ENCODE measurements at regions of chr5 and their contacts with region 1.

Region 1: GRCh38 chr5:179060116-179061008 is at the start of gene ZNF354C:
- DNase-seq: peak; percentile 87
- ATAC-seq: peak; percentile 97
- H3K4me3 ChIP-seq: peak within 1 kb of the TSS; percentile 45 to 87 (median 78)
- H3K4me3 Mint-ChIP-seq: peak within 1 kb of the TSS; percentile 91
- H3K27ac ChIP-seq: peak within 1 kb of the TSS; percentile 41 to 77
- H3K27ac Mint-ChIP-seq: peak within 1 kb of the TSS; percentile 86
- H3K4me1 ChIP-seq: peaks cover 5 to 11% of the 10 kb centered on the region in 2 donors
- H3K4me1 Mint-ChIP-seq: peaks cover 21% of the 10 kb centered on the region
- H3K27me3 ChIP-seq: peaks cover 0 to 4% (median 0%) of the 10 kb centered on the region in 4 experiments
- H3K27me3 Mint-ChIP-seq: peaks cover 5% of the 10 kb centered on the region
- CTCF ChIP-seq: no peak
- total RNA-seq, gene ZNF354C: 9.1 and 9.5 TPM in 2 replicates

Region 2: DNA sequence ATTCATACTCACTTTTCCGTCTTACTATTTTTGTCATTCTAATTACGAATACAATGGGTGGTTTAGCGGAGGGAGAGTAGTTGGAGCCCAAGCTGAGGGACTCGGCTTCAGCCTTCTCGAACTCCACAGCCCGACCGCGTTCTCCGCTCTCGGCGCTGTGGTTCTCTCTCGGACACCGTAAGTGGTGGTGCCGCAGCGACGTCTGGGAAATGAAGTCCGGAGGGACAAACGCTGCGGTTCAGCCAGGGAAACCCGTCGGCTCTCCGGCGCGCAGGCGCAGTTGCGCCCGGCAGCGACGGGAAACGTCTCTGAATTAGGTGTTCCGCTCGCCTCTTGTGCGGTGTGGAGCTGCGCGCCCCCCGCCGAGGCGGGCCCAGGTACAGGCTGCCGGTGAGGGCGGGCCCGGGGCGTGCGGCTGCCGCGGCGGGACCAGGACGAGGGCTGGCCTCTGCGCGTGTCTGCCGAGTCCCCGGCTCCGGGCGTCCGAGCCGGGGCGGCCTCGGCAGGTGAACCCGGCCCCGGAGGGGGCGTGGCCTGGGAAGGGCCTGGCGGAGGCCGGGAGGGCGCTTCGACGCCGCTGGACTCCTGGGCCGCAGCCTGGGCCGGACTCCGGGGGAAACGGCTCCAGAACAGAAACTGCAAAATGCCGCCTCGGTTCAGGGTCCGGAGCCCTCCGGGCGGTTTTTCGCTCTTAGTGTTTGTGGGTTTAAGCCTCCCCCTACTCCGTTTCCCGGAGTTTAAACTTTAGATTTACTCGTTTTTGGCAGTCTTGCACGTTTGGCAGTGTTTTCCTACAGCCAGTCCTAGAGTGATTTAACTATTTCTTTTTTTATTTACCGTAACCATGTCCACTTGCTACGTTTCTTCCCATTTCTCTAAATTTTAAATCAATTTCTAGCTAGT is 36.6 kb before region 1 on chr5 and contains the start of gene ZNF879:
- CTCF ChIA-PET with region 1: interaction called, 4 read pairs
- POLR2A ChIA-PET with region 1: interaction called, 3 read pairs
- intact Hi-C with region 1: loop called (anchors 1 kb)
- DNase-seq: peak; percentile 97
- ATAC-seq: peak; percentile 94
- H3K4me3 ChIP-seq: peak within 1 kb of the TSS; percentile 53 to 74 (median 67)
- H3K4me3 Mint-ChIP-seq: peak within 1 kb of the TSS; percentile 97
- H3K27ac ChIP-seq: peak within 1 kb of the TSS in 1 of 2 donors; percentile 76
- H3K27ac Mint-ChIP-seq: peak within 1 kb of the TSS; percentile 91
- H3K4me1 ChIP-seq: peaks cover 7 to 18% of the 10 kb centered on the region in 2 donors
- H3K4me1 Mint-ChIP-seq: peaks cover 15% of the 10 kb centered on the region
- H3K27me3 ChIP-seq: no peaks in the 10 kb centered on the region
- H3K27me3 Mint-ChIP-seq: no peaks in the 10 kb centered on the region
- CTCF ChIP-seq: no peak
- total RNA-seq, gene ZNF879: 13.2 and 14.7 TPM in 2 replicates

Measured in B cell (primary cell).